ENCODE measurements at regions of chr2 and their contacts with region 1.

Region 1: GRCh38 chr2:118032169-118033013 is 18.5 kb upstream of the CCDC93 start:
- DNase-seq: peak in 7 of 9 experiments; percentile 9 to 63 (median 39)
- ATAC-seq: peak; percentile 71
- H3K4me3 ChIP-seq: no peak overlapping the region
- H3K4me3 Mint-ChIP-seq: no peak overlapping the region
- H3K27ac ChIP-seq: no peak overlapping the region
- H3K27ac Mint-ChIP-seq: no peak overlapping the region
- H3K4me1 ChIP-seq: no peaks in the 10 kb centered on the region
- H3K4me1 Mint-ChIP-seq: no peaks in the 10 kb centered on the region
- H3K27me3 ChIP-seq: no peaks in the 10 kb centered on the region
- H3K27me3 Mint-ChIP-seq: peaks cover 33% of the 10 kb centered on the region
- CTCF ChIP-seq: peak; percentile 91

Region 2: GRCh38 chr2:118021361-118021760 is 11.0 kb before region 1 on chr2:
- CTCF ChIA-PET with region 1: interaction called, 16 read pairs
- POLR2A ChIA-PET with region 1: no interaction called
- intact Hi-C with region 1: no loop called
- DNase-seq: no peak
- ATAC-seq: no peak
- H3K4me3 ChIP-seq: no peak overlapping the region
- H3K4me3 Mint-ChIP-seq: no peak overlapping the region
- H3K27ac ChIP-seq: no peak overlapping the region
- H3K27ac Mint-ChIP-seq: no peak overlapping the region
- H3K4me1 ChIP-seq: no peaks in the 10 kb centered on the region
- H3K4me1 Mint-ChIP-seq: peaks cover 9% of the 10 kb centered on the region
- H3K27me3 ChIP-seq: no peaks in the 10 kb centered on the region
- H3K27me3 Mint-ChIP-seq: peaks cover 10% of the 10 kb centered on the region
- CTCF ChIP-seq: no peak

Region 3: DNA sequence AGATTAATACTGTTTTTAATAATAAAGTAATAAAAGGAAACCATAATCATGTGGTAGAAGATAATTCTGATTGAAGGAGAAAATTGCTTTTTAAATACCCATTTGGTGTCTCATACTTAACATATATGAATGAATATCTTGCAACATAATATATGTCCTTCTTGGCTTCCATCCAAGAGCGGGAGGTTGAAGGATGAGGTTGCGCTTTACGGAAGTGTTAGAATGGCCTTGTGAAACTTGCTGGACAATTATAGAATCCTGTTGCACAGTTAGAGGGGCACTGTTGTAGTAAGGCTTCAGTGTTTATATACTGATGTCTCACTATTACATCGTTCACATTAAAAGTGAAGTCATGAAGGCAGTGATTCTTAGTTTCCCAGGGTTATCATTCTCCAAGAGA is 65.3 kb after region 1 on chr2:
- CTCF ChIA-PET with region 1: no interaction called
- POLR2A ChIA-PET with region 1: no interaction called
- intact Hi-C with region 1: no loop called
- DNase-seq: peak in 1 of 9 experiments; percentile 5
- ATAC-seq: no peak
- H3K4me3 ChIP-seq: no peak overlapping the region
- H3K4me3 Mint-ChIP-seq: no peak overlapping the region
- H3K27ac ChIP-seq: no peak overlapping the region
- H3K27ac Mint-ChIP-seq: no peak overlapping the region
- H3K4me1 ChIP-seq: peaks cover 9% of the 10 kb centered on the region
- H3K4me1 Mint-ChIP-seq: peaks cover 39% of the 10 kb centered on the region
- H3K27me3 ChIP-seq: no peaks in the 10 kb centered on the region
- H3K27me3 Mint-ChIP-seq: no peaks in the 10 kb centered on the region
- CTCF ChIP-seq: no peak

Measured in CD8-positive, alpha-beta T cell (primary cell).